Astrocyte of the cerebellum (primary cell): ENCODE measurements at regions of chr17 and their contacts with region 1.

Region 1: GRCh38 chr17:43846221-43846712 is 709 bp upstream of the CD300LG start:
- DNase-seq: peak; percentile 31
- H3K4me3 ChIP-seq: no peak overlapping the region
- CTCF ChIP-seq: peak; percentile 100

Region 2: DNA sequence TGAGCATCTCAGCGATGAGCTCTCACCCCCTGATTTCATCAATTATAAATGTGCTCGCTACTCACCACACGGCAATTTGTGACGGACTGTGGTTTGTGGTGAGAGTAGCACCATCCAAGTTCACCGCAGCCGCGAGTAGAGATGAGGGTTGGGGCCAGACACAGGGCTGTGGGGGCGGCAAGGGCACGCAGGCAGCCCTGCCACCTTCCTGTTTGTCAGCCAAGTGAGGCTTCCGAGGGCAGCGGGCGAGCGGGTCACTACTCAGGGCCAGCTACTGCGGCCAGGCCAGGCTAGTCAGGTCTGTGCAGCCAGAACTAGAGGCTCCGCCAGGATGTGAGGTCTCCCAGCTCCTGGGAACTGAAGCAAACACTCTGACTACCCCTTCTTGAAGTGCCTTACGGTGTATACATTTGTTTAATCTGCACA is 144.9 kb before region 1 on chr17:
- in situ Hi-C with region 1: loop called (anchors 10 kb)
- DNase-seq: peak; percentile 79
- H3K4me3 ChIP-seq: no peak overlapping the region
- CTCF ChIP-seq: no peak

Region 3: GRCh38 chr17:43800736-43801135 is 45.5 kb before region 1 on chr17:
- in situ Hi-C with region 1: no loop called
- DNase-seq: no peak
- H3K4me3 ChIP-seq: no peak overlapping the region
- CTCF ChIP-seq: no peak

Region 4: DNA sequence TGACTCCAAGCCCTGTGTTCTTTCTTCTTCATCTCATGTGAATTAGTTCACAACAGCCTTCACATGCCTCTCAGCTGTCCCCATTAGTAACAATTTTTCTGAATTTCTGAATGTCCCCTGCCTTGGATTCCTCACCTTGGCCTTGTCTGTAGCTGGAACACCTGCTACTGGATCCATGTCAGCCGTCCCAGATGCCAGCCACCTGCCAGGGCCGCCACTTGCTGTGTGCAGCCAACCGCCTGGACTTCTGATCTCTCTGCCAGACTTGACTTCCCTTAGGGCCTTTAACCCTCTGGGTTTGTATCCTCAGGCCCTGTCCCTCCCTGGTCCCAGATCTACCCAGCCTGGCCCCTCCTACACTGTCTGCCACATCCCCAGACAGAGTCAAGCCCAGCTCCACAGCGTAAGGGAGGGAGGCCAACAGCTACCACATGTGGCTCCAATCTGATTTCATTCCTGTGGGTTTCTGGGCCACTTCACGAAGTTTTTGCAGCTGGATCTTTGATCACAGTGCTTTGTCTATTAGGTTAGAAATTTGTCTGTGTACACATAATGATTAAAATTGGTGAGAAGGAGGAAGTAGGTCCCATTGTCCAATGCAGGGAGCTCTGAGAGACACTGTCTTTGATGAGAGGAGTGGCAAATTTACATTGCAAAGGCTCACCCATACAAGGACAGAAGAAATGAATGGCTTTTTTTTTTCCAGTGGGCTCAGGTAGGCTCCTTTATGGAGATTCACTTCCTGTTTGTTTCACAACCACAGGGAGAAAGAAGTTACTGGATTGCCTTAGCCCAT is 45.8 kb after region 1 on chr17:
- in situ Hi-C with region 1: no loop called
- DNase-seq: no peak
- H3K4me3 ChIP-seq: no peak overlapping the region
- CTCF ChIP-seq: no peak